MCF 10A (cell line): ENCODE measurements at regions of chr1 and their contacts with region 1.

Region 1: DNA sequence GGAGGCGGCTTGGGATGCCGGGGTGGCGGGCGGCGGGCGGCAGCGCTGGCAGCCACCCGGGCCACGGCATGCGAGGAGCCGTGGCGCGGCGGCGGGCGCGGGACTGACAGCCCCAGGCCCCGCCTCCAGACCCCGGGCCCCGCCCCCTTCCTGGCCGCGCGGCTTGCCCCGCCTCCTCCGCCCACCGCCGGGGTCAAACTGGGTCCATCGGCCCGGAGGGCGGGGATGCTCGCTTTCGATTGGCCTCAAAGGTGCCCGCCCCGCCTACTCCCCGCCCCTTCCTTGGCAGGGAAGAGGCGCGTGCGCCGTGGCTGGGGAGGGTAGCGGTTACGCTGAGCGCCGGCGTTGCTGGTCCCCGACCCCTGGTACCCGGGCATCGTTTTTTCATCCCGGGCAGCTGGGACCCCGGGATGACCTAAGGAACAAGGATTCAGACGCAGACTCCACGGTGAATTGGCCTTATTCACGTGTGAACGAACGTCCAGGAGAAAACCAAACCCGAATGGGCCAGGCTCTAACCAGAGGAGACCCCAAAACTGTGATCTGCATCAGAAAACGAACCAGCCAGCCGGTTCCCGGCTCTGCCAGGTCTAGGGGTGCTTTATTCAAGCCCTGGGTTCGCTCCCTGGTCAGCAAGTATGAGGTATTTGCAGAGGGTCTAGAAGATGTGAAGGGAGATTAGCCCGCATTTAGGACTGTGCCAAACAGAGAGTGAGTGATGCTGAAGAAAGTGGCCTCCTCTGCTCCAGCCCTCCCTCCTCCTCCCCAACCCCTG is 117.2 kb upstream of the GUCA2B start:
- DNase-seq: peak; percentile 91
- H3K4me3 Mint-ChIP-seq: peak overlapping the region; percentile 69
- H3K27ac Mint-ChIP-seq: no peak overlapping the region
- H3K4me1 Mint-ChIP-seq: no peaks in the 10 kb centered on the region
- H3K27me3 Mint-ChIP-seq: peaks cover 12% of the 10 kb centered on the region
- CTCF ChIP-seq: no peak

Region 2: GRCh38 chr1:41662061-41662764 is 373.8 kb before region 1 on chr1:
- CTCF ChIA-PET with region 1: no interaction called
- POLR2A ChIA-PET with region 1: no interaction called
- intact Hi-C with region 1: loop called (anchors 5 kb)
- DNase-seq: peak; percentile 51
- H3K4me3 Mint-ChIP-seq: peak overlapping the region; percentile 81
- H3K27ac Mint-ChIP-seq: no peak overlapping the region
- H3K4me1 Mint-ChIP-seq: peaks cover 50% of the 10 kb centered on the region
- H3K27me3 Mint-ChIP-seq: peaks cover 12% of the 10 kb centered on the region
- CTCF ChIP-seq: no peak

Region 3: DNA sequence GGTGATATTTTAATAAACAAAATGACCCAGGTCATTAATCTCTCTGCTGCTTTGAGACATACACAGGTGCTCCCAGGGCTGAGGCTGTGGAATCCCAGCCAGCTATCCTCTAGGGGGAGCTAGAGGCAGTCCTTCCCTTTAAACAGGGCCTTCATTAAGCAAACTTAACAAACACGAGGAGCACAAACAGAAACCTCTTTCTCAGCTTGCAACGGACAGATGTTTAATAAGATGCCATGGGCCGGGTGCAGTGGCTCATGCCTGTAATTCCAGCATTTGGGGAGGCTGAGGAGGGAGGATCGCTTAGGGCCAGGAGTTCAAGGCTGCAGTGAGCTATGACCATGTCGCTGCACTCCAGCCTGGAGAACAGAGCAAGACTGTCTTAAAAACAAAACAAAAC is 224.0 kb before region 1 on chr1:
- CTCF ChIA-PET with region 1: no interaction called
- POLR2A ChIA-PET with region 1: no interaction called
- intact Hi-C with region 1: loop called (anchors 1 kb)
- DNase-seq: peak; percentile 79
- H3K4me3 Mint-ChIP-seq: no peak overlapping the region
- H3K27ac Mint-ChIP-seq: no peak overlapping the region
- H3K4me1 Mint-ChIP-seq: peaks cover 7% of the 10 kb centered on the region
- H3K27me3 Mint-ChIP-seq: no peaks in the 10 kb centered on the region
- CTCF ChIP-seq: peak; percentile 59